ENCODE measurements at regions of chr22 and their contacts with region 1.

Region 1: GRCh38 chr22:42863349-42863961 is 6.4 kb upstream of the ARFGAP3 start:
- DNase-seq: no peak
- H3K4me3 ChIP-seq: no peak overlapping the region
- H3K27ac ChIP-seq: no peak overlapping the region
- H3K4me1 ChIP-seq: peaks cover 19% of the 10 kb centered on the region
- H3K27me3 ChIP-seq: no peaks in the 10 kb centered on the region
- CTCF ChIP-seq: no peak

Region 2: GRCh38 chr22:43036282-43036829 is 172.9 kb after region 1 on chr22:
- intact Hi-C with region 1: loop called (anchors 10 kb)
- DNase-seq: peak; percentile 75
- H3K4me3 ChIP-seq: peak overlapping the region; percentile 43
- H3K27ac ChIP-seq: peak overlapping the region; percentile 65
- H3K4me1 ChIP-seq: peaks cover 15% of the 10 kb centered on the region
- H3K27me3 ChIP-seq: no peaks in the 10 kb centered on the region
- CTCF ChIP-seq: no peak

Measured in left ventricle myocardium inferior (tissue), 1 donor.